Left colon (tissue), 2 donors: ENCODE measurements at regions of chr4 and their contacts with region 1.

Region 1: DNA sequence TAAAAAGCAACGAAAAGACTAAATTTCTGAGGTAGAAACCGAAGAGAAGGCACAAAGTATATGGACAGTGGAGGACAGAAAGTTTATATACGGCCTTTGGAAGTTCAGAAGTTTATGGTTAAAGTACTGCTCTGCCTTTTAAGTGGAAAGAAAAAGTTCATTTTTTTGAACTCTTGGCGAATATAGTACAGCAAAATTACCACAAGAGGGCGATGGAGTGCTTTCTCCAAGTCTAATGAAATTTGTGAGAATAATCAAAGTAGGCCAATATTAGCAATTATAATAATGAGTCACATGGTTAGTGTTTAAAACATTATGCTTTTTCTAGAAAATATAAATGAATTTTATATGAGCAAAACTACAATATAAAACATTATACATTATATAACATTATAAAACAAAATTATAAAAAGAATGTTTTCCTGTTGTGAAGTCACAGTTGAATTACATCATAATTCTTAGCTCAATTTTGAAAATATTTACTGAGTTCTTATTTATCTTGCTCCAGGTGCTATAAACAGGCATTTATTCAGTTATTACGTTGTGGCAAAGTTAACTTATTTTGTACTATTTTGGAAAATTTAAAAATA is 136.2 kb upstream of the BMPR1B start:
- DNase-seq: no peak
- ATAC-seq: peak; percentile 40

Region 2: GRCh38 chr4:95095348-95095974 is 473.9 kb after region 1 on chr4:
- intact Hi-C with region 1: loop called in 1 of 2 experiments (anchors 10 kb)
- DNase-seq: no peak
- ATAC-seq: peak; percentile 59

Region 3: GRCh38 chr4:95124906-95125504 is 503.4 kb after region 1 on chr4:
- intact Hi-C with region 1: loop called in 1 of 2 experiments (anchors 10 kb)
- DNase-seq: no peak
- ATAC-seq: peak; percentile 70

Region 4: GRCh38 chr4:95178938-95179337 is 557.4 kb after region 1 on chr4:
- intact Hi-C with region 1: no loop called
- DNase-seq: no peak
- ATAC-seq: no peak